Right lobe of liver (tissue), 6 donors: ENCODE measurements at regions of chr9 and their contacts with region 1.

Region 1: DNA sequence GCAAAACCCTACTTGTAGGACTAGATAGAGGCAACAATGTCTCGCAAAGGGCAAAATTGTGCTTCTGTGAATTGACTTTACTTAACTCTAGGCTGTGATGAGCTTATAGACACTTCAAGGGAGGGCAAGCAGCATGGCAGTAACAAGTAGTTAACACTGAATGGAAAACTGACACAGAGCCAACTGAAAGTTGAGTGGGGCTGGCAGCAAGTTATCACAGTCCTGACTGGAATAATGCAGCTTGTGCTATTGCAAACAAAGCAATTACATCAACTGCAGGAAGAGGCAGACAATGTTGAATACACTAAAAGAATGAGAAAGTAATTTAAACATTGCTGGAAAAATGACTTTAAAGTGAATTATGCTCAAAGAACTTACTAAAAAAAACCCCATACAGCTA is 62.2 kb downstream of the RNF38 start:
- DNase-seq: no peak
- ATAC-seq: peak; percentile 64 to 87 (median 80)
- H3K4me3 ChIP-seq: no peak overlapping the region
- H3K27ac ChIP-seq: peak overlapping the region in 1 of 3 donors; percentile 20
- H3K4me1 ChIP-seq: peaks cover 0 to 8% (median 0%) of the 10 kb centered on the region in 4 donors
- H3K27me3 ChIP-seq: no peaks in the 10 kb centered on the region
- CTCF ChIP-seq: no peak
- POLR2A ChIP-seq: no peak

Region 2: DNA sequence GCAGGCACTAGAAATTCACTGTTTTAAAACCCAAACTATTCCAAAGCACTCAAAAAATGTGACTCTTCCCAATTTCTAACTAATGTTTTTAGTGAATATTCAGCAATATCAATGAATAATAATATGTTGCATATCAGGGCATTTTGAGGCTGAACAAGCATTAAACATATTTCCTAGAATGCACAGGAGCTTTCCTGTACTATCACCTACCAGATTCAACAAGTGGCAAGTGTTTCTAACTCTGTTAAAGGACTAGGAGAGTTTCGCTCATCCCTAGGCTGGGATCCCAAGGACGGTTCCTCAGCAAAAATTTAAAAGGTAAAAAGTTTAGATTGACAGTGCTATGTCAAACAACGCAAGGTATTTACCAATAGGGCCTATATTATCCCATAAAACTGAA is 100.6 kb before region 1 on chr9:
- intact Hi-C with region 1: loop called in 1 of 2 experiments (anchors 10 kb)
- DNase-seq: no peak
- ATAC-seq: no peak
- H3K4me3 ChIP-seq: no peak overlapping the region
- H3K27ac ChIP-seq: no peak overlapping the region
- H3K4me1 ChIP-seq: no peaks in the 10 kb centered on the region
- H3K27me3 ChIP-seq: no peaks in the 10 kb centered on the region
- CTCF ChIP-seq: no peak
- POLR2A ChIP-seq: no peak

Region 3: GRCh38 chr9:36637491-36638270 is 299.8 kb after region 1 on chr9:
- intact Hi-C with region 1: no loop called
- DNase-seq: no peak
- ATAC-seq: no peak
- H3K4me3 ChIP-seq: no peak overlapping the region
- H3K27ac ChIP-seq: no peak overlapping the region
- H3K4me1 ChIP-seq: no peaks in the 10 kb centered on the region
- H3K27me3 ChIP-seq: no peaks in the 10 kb centered on the region
- CTCF ChIP-seq: no peak
- POLR2A ChIP-seq: no peak